GM10248 (cell line): ENCODE measurements at regions of chr15 and their contacts with region 1.

Region 1: GRCh38 chr15:68559345-68560310 is 19.2 kb upstream of the CORO2B start:
- DNase-seq: peak; percentile 88
- CTCF ChIP-seq: peak; percentile 91

Region 2: GRCh38 chr15:68574046-68574445 is 14.4 kb after region 1 on chr15:
- CTCF ChIA-PET with region 1: interaction called, 30 read pairs
- POLR2A ChIA-PET with region 1: no interaction called
- DNase-seq: no peak
- CTCF ChIP-seq: no peak

Region 3: GRCh38 chr15:68924866-68925560 is 365.4 kb after region 1 on chr15:
- CTCF ChIA-PET with region 1: interaction called, 19 read pairs
- POLR2A ChIA-PET with region 1: no interaction called
- DNase-seq: peak; percentile 65
- CTCF ChIP-seq: peak; percentile 68